Mammary epithelial cell (primary cell): ENCODE measurements at regions of chr19 and their contacts with region 1.

Region 1: GRCh38 chr19:46579361-46579879 is 21.7 kb upstream of the CALM3 start:
- DNase-seq: no peak
- H3K4me3 ChIP-seq: no peak overlapping the region
- H3K27ac ChIP-seq: no peak overlapping the region
- H3K4me1 ChIP-seq: no peaks in the 10 kb centered on the region
- H3K27me3 ChIP-seq: no peaks in the 10 kb centered on the region
- CTCF ChIP-seq: no peak

Region 2: DNA sequence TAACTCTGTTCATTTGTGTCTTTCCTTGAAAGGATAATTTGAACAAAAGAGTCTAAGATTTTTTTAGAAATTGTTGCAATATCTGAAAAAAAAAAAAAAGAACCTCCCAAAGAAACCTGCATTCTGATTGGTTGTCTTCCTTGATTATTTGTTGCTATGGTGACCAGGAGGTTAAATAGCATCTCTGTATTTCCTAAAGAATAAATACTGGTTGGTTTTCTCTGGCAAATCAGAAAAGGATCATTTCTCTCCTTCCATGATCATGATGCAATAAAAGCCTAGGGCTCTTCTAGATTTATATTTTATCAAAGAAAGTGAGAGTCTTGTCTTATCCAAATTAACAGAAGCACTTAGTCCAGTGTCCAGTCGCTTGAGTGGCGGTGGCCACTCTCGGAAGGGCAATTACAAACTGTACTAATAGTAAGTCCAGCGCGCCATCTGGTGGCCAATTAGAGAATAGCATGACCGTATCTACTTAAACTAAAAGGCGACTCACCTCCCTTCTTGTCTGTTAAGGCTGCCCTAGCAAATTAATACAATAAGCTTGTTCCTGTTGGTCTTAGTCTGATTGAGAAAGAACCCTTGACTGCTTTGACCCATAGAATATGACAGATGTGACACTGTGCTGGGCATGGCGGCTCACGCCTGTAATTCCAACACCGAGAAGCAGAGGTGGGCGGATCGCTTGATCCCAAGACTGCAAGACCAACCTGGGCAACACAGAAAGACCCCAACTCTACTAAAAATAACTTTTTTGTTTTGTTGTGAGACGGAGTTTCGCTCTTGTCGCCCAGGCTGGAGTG is 36.8 kb before region 1 on chr19:
- CTCF ChIA-PET with region 1: no interaction called
- dilution Hi-C with region 1: no loop called
- in situ Hi-C with region 1: no loop called
- intact Hi-C with region 1: no loop called
- DNase-seq: peak; percentile 76
- H3K4me3 ChIP-seq: no peak overlapping the region
- H3K27ac ChIP-seq: no peak overlapping the region
- H3K4me1 ChIP-seq: no peaks in the 10 kb centered on the region
- H3K27me3 ChIP-seq: no peaks in the 10 kb centered on the region
- CTCF ChIP-seq: peak; percentile 72 to 75

Region 3: GRCh38 chr19:46591254-46591653 is 11.8 kb after region 1 on chr19:
- CTCF ChIA-PET with region 1: interaction called, 13 read pairs
- dilution Hi-C with region 1: no loop called
- in situ Hi-C with region 1: no loop called
- intact Hi-C with region 1: no loop called
- DNase-seq: no peak
- H3K4me3 ChIP-seq: no peak overlapping the region
- H3K27ac ChIP-seq: no peak overlapping the region
- H3K4me1 ChIP-seq: no peaks in the 10 kb centered on the region
- H3K27me3 ChIP-seq: no peaks in the 10 kb centered on the region
- CTCF ChIP-seq: no peak

Region 4: GRCh38 chr19:46678110-46678732 is 98.8 kb after region 1 on chr19:
- CTCF ChIA-PET with region 1: no interaction called
- dilution Hi-C with region 1: loop called (anchors 5 kb)
- in situ Hi-C with region 1: no loop called
- intact Hi-C with region 1: no loop called
- DNase-seq: no peak
- H3K4me3 ChIP-seq: no peak overlapping the region
- H3K27ac ChIP-seq: no peak overlapping the region
- H3K4me1 ChIP-seq: no peaks in the 10 kb centered on the region
- H3K27me3 ChIP-seq: no peaks in the 10 kb centered on the region
- CTCF ChIP-seq: no peak